ENCODE measurements at regions of chr2 and their contacts with region 1.

Region 1: DNA sequence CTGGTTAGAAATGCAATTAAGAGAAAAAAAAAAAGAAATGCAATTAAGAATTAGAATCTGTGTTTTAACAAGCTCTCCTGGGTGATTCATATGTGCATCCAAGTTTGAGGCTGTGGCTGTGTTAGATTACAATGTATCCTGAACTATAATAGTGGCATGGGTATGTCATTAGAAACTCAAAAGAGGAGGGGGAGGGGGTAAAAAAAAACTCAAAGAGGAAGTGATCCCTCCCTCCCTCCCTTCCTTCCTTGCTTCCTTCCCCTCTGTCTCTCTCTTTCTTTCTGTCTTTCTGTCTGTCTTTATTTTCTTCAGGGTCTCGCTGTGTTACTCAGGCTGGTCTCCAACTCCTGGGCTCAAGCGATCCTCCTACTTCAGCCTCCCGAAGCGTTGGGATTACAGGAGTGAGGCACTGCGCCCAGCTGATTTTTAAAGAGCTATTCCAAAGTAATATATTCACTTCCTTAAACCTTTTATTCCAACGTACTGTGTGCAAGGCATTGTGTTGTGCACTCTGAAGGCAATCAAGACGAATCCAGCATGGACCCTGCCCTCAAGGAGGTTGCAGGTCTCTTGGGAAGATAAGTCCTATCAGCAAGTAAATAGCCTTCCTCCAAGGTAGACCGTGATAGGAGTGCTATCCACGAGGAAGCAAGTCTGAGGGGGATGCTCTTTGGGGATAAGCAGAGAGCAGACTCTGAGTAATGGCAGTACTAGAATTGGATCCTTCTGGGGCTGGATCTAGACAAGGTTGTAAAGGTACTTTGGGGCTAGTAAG is 35.9 kb upstream of the MCFD2 start:
- DNase-seq: no peak
- ATAC-seq: peak; percentile 54
- H3K4me3 Mint-ChIP-seq: peak overlapping the region; percentile 57
- H3K27ac Mint-ChIP-seq: peak overlapping the region; percentile 76
- H3K4me1 Mint-ChIP-seq: peaks cover 61% of the 10 kb centered on the region
- H3K27me3 Mint-ChIP-seq: no peaks in the 10 kb centered on the region
- CTCF ChIP-seq: no peak

Region 2: DNA sequence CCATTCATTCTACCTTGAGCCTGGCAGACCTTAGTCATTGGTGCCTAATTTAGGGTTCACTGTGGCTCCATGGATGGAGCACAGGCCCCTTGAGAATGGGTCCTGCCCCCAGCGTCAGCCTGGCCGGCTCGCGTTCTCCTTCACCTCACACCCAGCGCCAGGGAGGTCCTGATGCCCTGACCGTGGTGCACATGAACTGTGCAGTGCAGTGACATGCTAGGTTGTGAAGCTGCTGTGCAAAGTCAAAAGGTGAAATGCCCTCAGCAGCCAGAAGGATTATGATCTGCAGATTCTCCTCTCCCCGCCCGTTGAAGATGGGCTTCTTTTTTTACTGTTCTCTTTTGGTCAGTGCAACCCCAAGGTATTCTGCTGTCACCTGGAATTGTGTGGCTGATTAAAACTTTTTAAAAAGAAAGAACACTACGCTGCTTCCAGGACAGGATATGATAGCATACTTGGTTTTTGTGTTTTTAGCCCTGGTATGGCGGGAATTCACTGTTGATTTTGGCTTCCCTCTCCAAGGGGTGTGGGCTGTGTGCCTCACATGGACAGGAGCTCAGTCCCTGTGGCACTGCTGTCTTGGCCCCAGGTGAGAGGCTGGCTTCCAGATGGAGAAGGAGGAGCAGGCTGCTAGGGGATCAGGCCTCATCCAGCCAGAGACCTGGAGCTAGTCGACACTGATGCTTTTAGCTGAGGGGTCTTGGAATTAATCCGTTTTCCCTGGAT is 13.5 kb after region 1 on chr2:
- CTCF ChIA-PET with region 1: interaction called, 4 read pairs
- POLR2A ChIA-PET with region 1: interaction called, 3 read pairs
- intact Hi-C with region 1: loop called (anchors 2 kb)
- DNase-seq: no peak
- ATAC-seq: no peak
- H3K4me3 Mint-ChIP-seq: no peak overlapping the region
- H3K27ac Mint-ChIP-seq: no peak overlapping the region
- H3K4me1 Mint-ChIP-seq: peaks cover 22% of the 10 kb centered on the region
- H3K27me3 Mint-ChIP-seq: no peaks in the 10 kb centered on the region
- CTCF ChIP-seq: no peak